Psoas muscle (tissue), 8 donors: ENCODE measurements at regions of chr19 and their contacts with region 1.

Region 1: GRCh38 chr19:19192078-19192882 is at the starts of genes BORCS8 and RFXANK:
- DNase-seq: peak; percentile 99
- ATAC-seq: peak; percentile 93 to 96 (median 96)
- H3K4me3 ChIP-seq: peak within 1 kb of the TSS; percentile 84
- H3K27ac ChIP-seq: peak within 1 kb of the TSS; percentile 98
- H3K4me1 ChIP-seq: peaks cover 36% of the 10 kb centered on the region
- H3K27me3 ChIP-seq: no peaks in the 10 kb centered on the region
- CTCF ChIP-seq: no peak
- total RNA-seq, gene BORCS8: 16.0 to 33.6 (median 21.0) TPM
- total RNA-seq, gene RFXANK: 33.3 to 53.5 (median 46.2) TPM

Region 2: GRCh38 chr19:19320362-19321142 is 128.3 kb after region 1 on chr19 and contains the starts of genes MAU2 and SUGP1:
- intact Hi-C with region 1: loop called (anchors 2 to 5 kb)
- DNase-seq: peak; percentile 88 to 94
- ATAC-seq: peak; percentile 90 to 93 (median 91)
- H3K4me3 ChIP-seq: peak within 1 kb of the TSS; percentile 93
- H3K27ac ChIP-seq: peak within 1 kb of the TSS; percentile 95
- H3K4me1 ChIP-seq: peaks cover 47% of the 10 kb centered on the region
- H3K27me3 ChIP-seq: no peaks in the 10 kb centered on the region
- CTCF ChIP-seq: peak; percentile 48
- total RNA-seq, gene MAU2: 26.2 to 55.1 (median 40.1) TPM
- total RNA-seq, gene SUGP1: 25.8 to 35.8 (median 29.0) TPM